ENCODE measurements at regions of chr19 and their contacts with region 1.

Region 1: GRCh38 chr19:52637718-52638585 is at the start of gene ZNF83:
- DNase-seq: peak; percentile 85 to 96 (median 91)
- ATAC-seq: peak; percentile 95
- H3K4me3 ChIP-seq: peak within 1 kb of the TSS; percentile 68 to 97
- H3K4me3 Mint-ChIP-seq: peak within 1 kb of the TSS; percentile 95
- H3K27ac ChIP-seq: peak within 1 kb of the TSS; percentile 90 to 99
- H3K27ac Mint-ChIP-seq: peak within 1 kb of the TSS; percentile 98
- H3K4me1 ChIP-seq: peaks cover 14% of the 10 kb centered on the region
- H3K4me1 Mint-ChIP-seq: peaks cover 26% of the 10 kb centered on the region
- H3K27me3 ChIP-seq: no peaks in the 10 kb centered on the region
- H3K27me3 Mint-ChIP-seq: no peaks in the 10 kb centered on the region
- CTCF ChIP-seq: no peak
- total RNA-seq, gene ZNF83: 49.4 to 51.2 TPM

Region 2: GRCh38 chr19:52296773-52297600 is 341.0 kb before region 1 on chr19 and contains the start of gene ZNF480:
- CTCF ChIA-PET with region 1: no interaction called
- POLR2A ChIA-PET with region 1: no interaction called
- intact Hi-C with region 1: loop called in 1 of 2 experiments (anchors 5 kb)
- DNase-seq: peak; percentile 73 to 94 (median 89)
- ATAC-seq: peak; percentile 92
- H3K4me3 ChIP-seq: peak within 1 kb of the TSS; percentile 96 to 97
- H3K4me3 Mint-ChIP-seq: peak within 1 kb of the TSS; percentile 97
- H3K27ac ChIP-seq: peak within 1 kb of the TSS; percentile 93 to 98
- H3K27ac Mint-ChIP-seq: peak within 1 kb of the TSS; percentile 99
- H3K4me1 ChIP-seq: peaks cover 7% of the 10 kb centered on the region
- H3K4me1 Mint-ChIP-seq: peaks cover 20% of the 10 kb centered on the region
- H3K27me3 ChIP-seq: no peaks in the 10 kb centered on the region
- H3K27me3 Mint-ChIP-seq: no peaks in the 10 kb centered on the region
- CTCF ChIP-seq: no peak
- total RNA-seq, gene ZNF480: 7.8 to 9.1 TPM

Region 3: GRCh38 chr19:52570000-52570861 is 67.7 kb before region 1 on chr19 and contains the start of gene ZNF701:
- CTCF ChIA-PET with region 1: no interaction called
- POLR2A ChIA-PET with region 1: interaction called, 3 read pairs
- intact Hi-C with region 1: loop called (anchors 1 kb)
- DNase-seq: peak; percentile 93 to 97 (median 95)
- ATAC-seq: peak; percentile 98
- H3K4me3 ChIP-seq: peak within 1 kb of the TSS; percentile 81 to 96
- H3K4me3 Mint-ChIP-seq: peak within 1 kb of the TSS; percentile 90
- H3K27ac ChIP-seq: peak within 1 kb of the TSS; percentile 77 to 91
- H3K27ac Mint-ChIP-seq: peak within 1 kb of the TSS; percentile 93
- H3K4me1 ChIP-seq: peaks cover 12% of the 10 kb centered on the region
- H3K4me1 Mint-ChIP-seq: peaks cover 42% of the 10 kb centered on the region
- H3K27me3 ChIP-seq: no peaks in the 10 kb centered on the region
- H3K27me3 Mint-ChIP-seq: no peaks in the 10 kb centered on the region
- CTCF ChIP-seq: peak; percentile 30
- total RNA-seq, gene ZNF701: 11.2 to 11.9 TPM

Region 4: DNA sequence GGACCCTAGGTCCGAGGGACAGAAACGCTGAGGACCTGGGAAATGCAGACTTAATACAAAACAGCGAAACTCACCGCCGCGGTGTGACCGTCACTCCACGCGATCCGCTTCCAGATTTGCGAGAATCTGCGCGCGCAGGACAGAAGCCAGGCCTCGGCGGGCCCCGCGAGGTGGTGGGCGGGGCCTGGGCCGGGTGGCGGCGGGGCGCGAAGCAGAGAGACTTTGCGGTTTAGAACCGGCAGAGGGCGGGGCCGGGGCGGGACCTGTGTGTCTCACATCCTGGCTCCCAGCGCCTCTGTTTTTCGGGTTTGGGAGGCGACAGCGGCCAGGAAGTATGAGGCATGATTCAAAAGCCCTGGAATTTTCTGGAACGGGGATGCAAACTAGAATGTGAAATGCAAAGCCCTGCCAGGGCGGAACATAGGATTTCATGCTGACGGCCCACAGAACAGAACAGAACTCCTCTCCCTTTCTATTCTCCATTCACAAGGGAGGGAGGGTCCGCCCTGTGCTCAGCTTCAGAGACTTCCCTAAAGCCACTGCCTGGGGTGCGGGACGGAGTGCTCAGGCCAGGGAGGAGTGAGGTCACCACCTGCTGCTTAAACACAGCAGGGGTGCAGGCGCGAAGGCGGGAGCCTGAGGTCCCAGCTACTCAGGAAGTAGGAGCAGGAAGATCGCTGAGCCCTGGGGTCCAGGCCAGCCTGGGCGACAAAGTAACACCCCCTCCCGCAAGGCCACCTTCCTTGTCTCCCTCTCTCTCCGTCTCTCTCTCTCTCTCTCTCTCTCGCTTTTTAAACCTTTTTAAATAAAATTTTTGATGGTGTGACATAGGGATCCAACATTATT is 52.6 kb after region 1 on chr19:
- CTCF ChIA-PET with region 1: no interaction called
- POLR2A ChIA-PET with region 1: no interaction called
- intact Hi-C with region 1: loop called (anchors 1 kb)
- DNase-seq: peak; percentile 75 to 94 (median 93)
- ATAC-seq: peak; percentile 97
- H3K4me3 ChIP-seq: peak overlapping the region; percentile 84 to 94
- H3K4me3 Mint-ChIP-seq: peak overlapping the region; percentile 92
- H3K27ac ChIP-seq: peak overlapping the region; percentile 58 to 87
- H3K27ac Mint-ChIP-seq: peak overlapping the region; percentile 95
- H3K4me1 ChIP-seq: peaks cover 16% of the 10 kb centered on the region
- H3K4me1 Mint-ChIP-seq: peaks cover 31% of the 10 kb centered on the region
- H3K27me3 ChIP-seq: no peaks in the 10 kb centered on the region
- H3K27me3 Mint-ChIP-seq: no peaks in the 10 kb centered on the region
- CTCF ChIP-seq: no peak

Region 5: GRCh38 chr19:52700673-52701072 is 62.7 kb after region 1 on chr19:
- CTCF ChIA-PET with region 1: no interaction called
- POLR2A ChIA-PET with region 1: no interaction called
- intact Hi-C with region 1: no loop called
- DNase-seq: no peak
- ATAC-seq: no peak
- H3K4me3 ChIP-seq: no peak overlapping the region
- H3K4me3 Mint-ChIP-seq: no peak overlapping the region
- H3K27ac ChIP-seq: no peak overlapping the region
- H3K27ac Mint-ChIP-seq: no peak overlapping the region
- H3K4me1 ChIP-seq: no peaks in the 10 kb centered on the region
- H3K4me1 Mint-ChIP-seq: no peaks in the 10 kb centered on the region
- H3K27me3 ChIP-seq: no peaks in the 10 kb centered on the region
- H3K27me3 Mint-ChIP-seq: no peaks in the 10 kb centered on the region
- CTCF ChIP-seq: no peak

Region 6: DNA sequence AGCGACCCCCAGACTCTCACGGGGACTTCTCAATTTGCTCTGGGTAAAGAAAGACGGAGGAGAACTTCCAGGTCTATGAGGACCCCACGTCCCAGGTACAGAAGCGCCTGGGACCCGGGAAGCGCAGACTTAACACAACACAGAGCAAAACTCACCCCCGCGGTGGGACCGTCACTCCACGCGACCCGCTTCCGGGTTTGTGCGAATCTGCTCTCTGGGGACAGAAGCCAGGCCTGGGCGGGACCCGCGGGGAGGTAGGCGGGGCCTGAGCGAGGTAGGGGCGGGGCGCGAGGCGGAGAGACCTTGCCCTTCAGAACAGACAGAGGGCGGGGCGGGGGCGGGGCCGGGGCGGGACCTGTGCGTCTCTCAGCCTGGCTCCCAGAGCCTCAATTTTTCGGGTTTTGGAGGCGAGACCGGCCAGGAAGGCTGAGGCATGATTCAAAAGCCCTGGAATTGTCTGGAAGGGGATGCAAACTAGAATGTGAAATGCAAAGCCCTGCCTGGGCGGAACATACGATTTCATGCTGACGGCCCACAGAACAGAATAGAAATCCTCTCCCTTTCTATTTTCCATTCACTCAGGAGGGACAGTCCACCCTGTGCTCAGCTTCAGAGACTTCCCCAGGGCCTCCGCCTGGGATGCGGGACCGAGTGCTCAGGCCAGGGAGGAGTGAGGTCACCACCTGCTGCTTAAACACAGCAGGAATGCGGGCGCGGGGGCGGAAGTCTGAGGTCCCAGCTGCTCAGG is 304.6 kb after region 1 on chr19:
- CTCF ChIA-PET with region 1: no interaction called
- POLR2A ChIA-PET with region 1: no interaction called
- intact Hi-C with region 1: loop called in 1 of 2 experiments (anchors 1 kb)
- DNase-seq: peak; percentile 91 to 97 (median 95)
- ATAC-seq: peak; percentile 99
- H3K4me3 ChIP-seq: peak overlapping the region; percentile 88 to 91
- H3K4me3 Mint-ChIP-seq: peak overlapping the region; percentile 95
- H3K27ac ChIP-seq: peak overlapping the region; percentile 66 to 86
- H3K27ac Mint-ChIP-seq: peak overlapping the region; percentile 93
- H3K4me1 ChIP-seq: peaks cover 7% of the 10 kb centered on the region
- H3K4me1 Mint-ChIP-seq: peaks cover 28% of the 10 kb centered on the region
- H3K27me3 ChIP-seq: no peaks in the 10 kb centered on the region
- H3K27me3 Mint-ChIP-seq: no peaks in the 10 kb centered on the region
- CTCF ChIP-seq: no peak